Heart left ventricle (tissue), 16 donors: ENCODE measurements at regions of chr17 and their contacts with region 1.

Region 1: DNA sequence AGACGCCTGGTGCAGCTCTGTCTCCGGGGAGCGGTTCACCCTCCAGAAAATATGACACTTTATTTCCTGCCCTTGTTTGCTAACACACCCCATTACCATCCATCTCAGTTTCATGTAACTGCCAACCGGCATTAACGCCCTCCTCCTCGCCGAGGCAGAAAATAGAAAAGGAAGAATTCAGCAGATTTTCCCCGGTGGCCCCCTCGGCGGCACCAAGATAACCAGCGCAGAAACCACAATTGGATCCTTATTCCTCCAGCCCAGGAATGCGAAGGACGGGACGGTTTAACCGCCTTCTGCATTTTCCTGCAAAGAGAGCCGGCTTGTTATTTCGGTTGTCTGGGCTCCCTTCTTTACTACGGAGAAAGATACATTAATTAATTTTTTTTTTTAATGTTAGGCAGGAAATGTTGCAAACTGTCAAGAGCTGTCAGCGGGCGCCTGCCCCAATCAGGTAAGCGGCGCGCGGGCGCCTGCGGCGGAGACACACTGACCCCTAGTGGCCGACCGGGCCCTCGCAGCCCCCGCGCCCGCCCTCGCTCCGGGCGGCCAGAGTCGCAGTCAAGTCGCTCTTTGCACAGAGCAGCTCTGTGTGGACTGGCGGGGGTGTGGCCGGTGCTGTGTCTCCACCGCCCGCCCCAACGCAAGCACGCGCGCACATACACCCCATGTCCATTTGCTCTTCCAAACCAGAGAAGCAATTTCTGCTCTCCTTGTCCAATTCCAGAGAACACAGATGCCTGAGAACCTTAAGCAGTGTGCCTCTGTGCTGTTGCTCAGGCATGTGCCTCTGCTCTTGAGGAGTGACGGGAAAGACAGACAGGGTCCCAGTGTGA is 53.6 kb downstream of the C17orf67 start:
- DNase-seq: peak; percentile 63 to 89 (median 75)
- ATAC-seq: peak; percentile 77 to 98 (median 95)
- H3K4me3 ChIP-seq: peak overlapping the region in 10 of 12 donors; percentile 10 to 51 (median 38)
- H3K27ac ChIP-seq: no peak overlapping the region
- H3K4me1 ChIP-seq: peaks cover 0 to 11% (median 8%) of the 10 kb centered on the region in 12 donors
- H3K27me3 ChIP-seq: peaks cover 0 to 43% (median 6%) of the 10 kb centered on the region in 9 donors
- CTCF ChIP-seq: peak; percentile 98 to 100 (median 99)
- POLR2A ChIP-seq: no peak

Region 2: GRCh38 chr17:56373981-56374833 is 405.9 kb before region 1 on chr17:
- intact Hi-C with region 1: no loop called
- DNase-seq: no peak
- ATAC-seq: no peak
- H3K4me3 ChIP-seq: no peak overlapping the region
- H3K27ac ChIP-seq: no peak overlapping the region
- H3K4me1 ChIP-seq: no peaks in the 10 kb centered on the region
- H3K27me3 ChIP-seq: no peaks in the 10 kb centered on the region
- CTCF ChIP-seq: no peak
- POLR2A ChIP-seq: no peak

Region 3: DNA sequence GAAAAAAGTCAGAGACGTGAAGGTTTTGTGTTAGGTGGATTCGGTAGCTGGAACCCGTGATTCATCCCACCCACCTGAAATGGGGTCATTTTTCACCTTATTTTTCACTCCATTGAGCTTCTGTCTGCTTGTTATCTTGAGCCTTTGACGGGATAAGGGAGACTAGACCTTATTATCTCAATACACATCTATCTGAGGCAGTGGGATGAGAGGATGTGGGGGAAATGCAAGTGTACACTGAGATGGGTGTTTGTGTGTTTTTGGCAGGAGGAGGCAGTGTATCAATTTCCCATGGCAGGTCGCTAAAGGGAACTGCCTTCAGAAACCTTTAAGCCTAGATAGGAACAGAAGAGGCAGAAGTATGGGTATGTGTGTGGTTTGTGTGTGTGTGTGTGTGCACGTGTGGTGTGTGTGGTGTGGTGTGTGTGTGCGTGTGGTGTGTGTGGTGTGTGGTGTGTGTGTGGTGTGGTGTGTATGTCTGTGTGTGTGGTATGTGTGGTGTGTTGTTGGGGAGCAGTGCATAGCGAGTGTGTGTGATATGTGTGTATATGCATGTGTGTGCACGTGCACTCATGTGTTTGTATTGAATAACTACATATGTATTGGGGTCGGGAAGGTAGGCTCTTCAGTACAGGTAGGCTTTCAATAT is 192.7 kb before region 1 on chr17:
- intact Hi-C with region 1: loop called in 9 of 10 experiments (anchors 1 to 5 kb)
- DNase-seq: no peak
- ATAC-seq: no peak
- H3K4me3 ChIP-seq: no peak overlapping the region
- H3K27ac ChIP-seq: no peak overlapping the region
- H3K4me1 ChIP-seq: peaks cover 0 to 4% (median 0%) of the 10 kb centered on the region in 12 donors
- H3K27me3 ChIP-seq: peaks cover 5 to 62% (median 22%) of the 10 kb centered on the region in 9 donors
- CTCF ChIP-seq: no peak
- POLR2A ChIP-seq: no peak

Region 4: GRCh38 chr17:56592487-56593085 is 187.5 kb before region 1 on chr17:
- intact Hi-C with region 1: loop called in 9 of 10 experiments (anchors 1 to 5 kb)
- DNase-seq: peak; percentile 35 to 86 (median 59)
- ATAC-seq: peak; percentile 55 to 85 (median 82)
- H3K4me3 ChIP-seq: peak overlapping the region; percentile 42 to 71 (median 56)
- H3K27ac ChIP-seq: no peak overlapping the region
- H3K4me1 ChIP-seq: peaks cover 4 to 56% (median 22%) of the 10 kb centered on the region in 12 donors
- H3K27me3 ChIP-seq: peaks cover 5 to 69% (median 37%) of the 10 kb centered on the region in 9 donors
- CTCF ChIP-seq: peak; percentile 72 to 99 (median 97)
- POLR2A ChIP-seq: no peak